Calu3 (cell line): ENCODE measurements at regions of chr14 and their contacts with region 1.

Region 1: GRCh38 chr14:101412741-101413140 is 148.6 kb upstream of the DIO3 start:
- DNase-seq: peak; percentile 30
- H3K4me3 Mint-ChIP-seq: peak overlapping the region; percentile 7
- H3K27ac Mint-ChIP-seq: peak overlapping the region; percentile 19
- H3K4me1 Mint-ChIP-seq: peaks cover 18% of the 10 kb centered on the region
- H3K27me3 Mint-ChIP-seq: peaks cover 10% of the 10 kb centered on the region
- CTCF ChIP-seq: no peak

Region 2: GRCh38 chr14:101301011-101301410 is 111.7 kb before region 1 on chr14:
- CTCF ChIA-PET with region 1: no interaction called
- intact Hi-C with region 1: loop called (anchors 5 kb)
- DNase-seq: no peak
- H3K4me3 Mint-ChIP-seq: no peak overlapping the region
- H3K27ac Mint-ChIP-seq: no peak overlapping the region
- H3K4me1 Mint-ChIP-seq: no peaks in the 10 kb centered on the region
- H3K27me3 Mint-ChIP-seq: no peaks in the 10 kb centered on the region
- CTCF ChIP-seq: no peak

Region 3: GRCh38 chr14:101475456-101476257 is 62.9 kb after region 1 on chr14:
- CTCF ChIA-PET with region 1: no interaction called
- intact Hi-C with region 1: loop called (anchors 5 kb)
- DNase-seq: peak; percentile 59
- H3K4me3 Mint-ChIP-seq: peak overlapping the region; percentile 93
- H3K27ac Mint-ChIP-seq: peak overlapping the region; percentile 97
- H3K4me1 Mint-ChIP-seq: peaks cover 44% of the 10 kb centered on the region
- H3K27me3 Mint-ChIP-seq: no peaks in the 10 kb centered on the region
- CTCF ChIP-seq: no peak

Region 4: DNA sequence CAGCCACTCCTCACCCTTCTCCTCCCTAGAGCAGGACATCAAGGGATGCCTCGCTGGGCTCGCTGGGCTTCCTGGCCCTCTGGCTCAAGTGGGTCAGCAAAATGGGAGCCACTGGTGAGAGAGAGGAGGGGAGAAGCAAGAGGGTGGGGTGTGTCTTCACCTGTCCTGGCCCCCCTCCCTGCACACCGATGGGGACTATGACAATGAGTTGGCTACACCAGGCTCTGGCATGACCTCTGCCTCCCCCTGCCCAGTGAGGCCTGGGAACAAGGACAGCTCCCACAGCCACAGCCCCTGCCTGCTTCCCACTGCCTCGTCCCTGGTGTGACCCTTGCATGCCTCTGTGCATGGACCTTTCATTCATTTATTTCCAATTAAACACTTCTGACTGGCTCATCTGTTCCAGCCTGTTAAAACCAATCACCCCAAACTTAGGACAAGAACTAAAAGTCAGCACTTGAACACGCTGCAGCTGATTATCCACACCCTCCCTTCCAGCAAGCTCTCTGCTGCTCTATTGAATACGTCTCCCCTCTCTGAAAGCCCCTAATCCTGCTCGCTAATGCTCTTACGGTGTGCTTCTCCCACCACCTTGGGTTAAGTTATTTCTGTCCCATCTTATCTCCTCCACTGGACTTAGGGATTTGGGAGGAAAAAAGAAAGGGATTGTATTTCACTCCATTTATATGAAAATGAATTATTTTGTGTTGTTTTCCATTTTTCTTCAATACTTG is 343.0 kb after region 1 on chr14:
- CTCF ChIA-PET with region 1: no interaction called
- intact Hi-C with region 1: no loop called
- DNase-seq: no peak
- H3K4me3 Mint-ChIP-seq: no peak overlapping the region
- H3K27ac Mint-ChIP-seq: no peak overlapping the region
- H3K4me1 Mint-ChIP-seq: no peaks in the 10 kb centered on the region
- H3K27me3 Mint-ChIP-seq: peaks cover 84% of the 10 kb centered on the region
- CTCF ChIP-seq: no peak